Activated naive CD4-positive, alpha-beta T cell treated with anti-CD3 and anti-CD28 coated beads for 36 hours (primary cell): ENCODE measurements at regions of chr14 and their contacts with region 1.

Region 1: DNA sequence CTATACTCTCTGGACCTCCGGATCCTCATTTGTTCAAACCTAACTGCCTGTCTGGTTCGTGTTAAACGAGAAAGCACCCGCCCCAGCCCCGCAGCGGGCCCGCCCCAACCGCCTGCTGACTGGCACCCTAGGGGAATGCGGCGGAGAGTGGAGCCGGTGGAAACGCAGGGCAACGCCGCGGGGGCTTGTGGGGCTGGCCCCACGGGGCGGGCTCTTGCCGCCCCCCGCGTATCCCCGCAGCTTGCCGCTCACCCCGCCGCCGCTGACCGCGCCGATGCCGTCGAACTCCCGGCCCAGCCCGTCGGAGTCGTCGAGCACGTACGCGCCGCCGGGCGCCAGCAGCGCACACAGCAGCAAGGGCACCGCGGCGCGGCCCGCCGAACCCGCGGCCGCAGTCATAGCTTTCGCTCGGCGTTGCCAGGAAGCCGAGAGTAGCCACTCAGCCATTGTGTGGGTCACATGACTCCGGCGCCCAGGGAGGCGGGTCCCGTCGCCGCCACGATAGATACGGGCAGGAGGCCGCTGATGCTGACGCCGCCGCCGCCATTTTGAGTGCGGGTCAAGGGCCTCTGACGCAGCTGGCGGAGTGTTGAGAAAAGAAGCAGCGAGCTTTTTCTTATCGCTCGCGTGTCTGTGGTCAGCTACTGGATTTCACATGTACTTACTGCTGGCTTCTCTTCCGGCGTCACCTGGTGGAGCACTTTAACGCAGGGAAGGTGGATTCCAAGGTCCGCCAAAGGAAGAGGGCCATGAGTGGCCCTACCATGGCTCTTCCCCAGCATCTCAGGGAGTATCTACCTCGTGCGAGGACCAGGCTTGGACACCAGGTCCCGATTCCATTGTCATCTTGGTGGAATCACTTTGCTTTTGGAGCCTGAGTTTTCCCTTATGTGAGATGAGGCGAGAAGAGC is at the start of gene GALC:
- DNase-seq: peak; percentile 96
- H3K4me3 Mint-ChIP-seq: peak within 1 kb of the TSS; percentile 81
- H3K27ac Mint-ChIP-seq: peak within 1 kb of the TSS; percentile 96
- H3K4me1 Mint-ChIP-seq: peaks cover 45% of the 10 kb centered on the region
- H3K27me3 Mint-ChIP-seq: no peaks in the 10 kb centered on the region
- total RNA-seq, gene GALC: 11.2 to 12.7 TPM

Region 2: GRCh38 chr14:87756661-87757060 is 236.3 kb before region 1 on chr14:
- CTCF ChIA-PET with region 1: no interaction called
- intact Hi-C with region 1: no loop called
- DNase-seq: no peak
- H3K4me3 Mint-ChIP-seq: no peak overlapping the region
- H3K27ac Mint-ChIP-seq: no peak overlapping the region
- H3K4me1 Mint-ChIP-seq: no peaks in the 10 kb centered on the region
- H3K27me3 Mint-ChIP-seq: no peaks in the 10 kb centered on the region

Region 3: DNA sequence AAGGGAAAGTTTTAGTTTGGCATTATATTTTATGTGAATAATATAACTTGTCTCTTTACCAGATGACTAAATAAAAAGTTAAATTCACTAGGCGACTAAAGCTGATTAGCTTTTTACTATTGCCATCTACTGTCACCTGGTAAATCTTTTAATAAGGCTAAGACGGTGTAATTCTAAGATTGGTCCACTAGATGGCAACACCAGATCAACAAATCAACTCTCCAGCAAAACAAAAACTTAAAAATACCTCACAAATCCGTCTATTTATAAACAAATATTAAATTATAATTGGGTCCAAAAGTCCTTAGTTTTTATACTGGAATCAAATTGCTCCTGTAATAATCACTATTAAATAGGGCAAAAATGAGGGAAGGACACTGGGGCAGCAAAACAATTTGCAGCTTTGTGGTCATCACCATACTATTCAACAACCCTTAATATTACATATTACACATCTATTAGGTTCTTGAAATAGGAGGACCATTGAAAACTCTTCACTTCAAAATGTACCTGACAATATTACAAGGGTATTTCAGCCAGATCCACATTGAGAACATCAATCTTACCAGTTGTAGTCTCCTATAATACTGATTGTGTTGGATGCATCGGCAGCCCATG is 47.9 kb before region 1 on chr14:
- CTCF ChIA-PET with region 1: interaction called, 4 read pairs
- intact Hi-C with region 1: loop called (anchors 5 kb)
- DNase-seq: no peak
- H3K4me3 Mint-ChIP-seq: no peak overlapping the region
- H3K27ac Mint-ChIP-seq: no peak overlapping the region
- H3K4me1 Mint-ChIP-seq: no peaks in the 10 kb centered on the region
- H3K27me3 Mint-ChIP-seq: no peaks in the 10 kb centered on the region

Region 4: GRCh38 chr14:88029500-88029899 is 36.5 kb after region 1 on chr14:
- CTCF ChIA-PET with region 1: no interaction called
- intact Hi-C with region 1: loop called (anchors 1 kb)
- DNase-seq: peak; percentile 28
- H3K4me3 Mint-ChIP-seq: no peak overlapping the region
- H3K27ac Mint-ChIP-seq: peak overlapping the region; percentile 8
- H3K4me1 Mint-ChIP-seq: peaks cover 53% of the 10 kb centered on the region
- H3K27me3 Mint-ChIP-seq: no peaks in the 10 kb centered on the region

Region 5: GRCh38 chr14:88385345-88386101 is 392.6 kb after region 1 on chr14 and contains the start of gene SPATA7:
- CTCF ChIA-PET with region 1: no interaction called
- intact Hi-C with region 1: loop called (anchors 10 kb)
- DNase-seq: peak; percentile 89
- H3K4me3 Mint-ChIP-seq: peak within 1 kb of the TSS; percentile 93
- H3K27ac Mint-ChIP-seq: peak within 1 kb of the TSS; percentile 56
- H3K4me1 Mint-ChIP-seq: peaks cover 9% of the 10 kb centered on the region
- H3K27me3 Mint-ChIP-seq: no peaks in the 10 kb centered on the region
- total RNA-seq, gene SPATA7: 3.3 to 3.5 TPM

Region 6: DNA sequence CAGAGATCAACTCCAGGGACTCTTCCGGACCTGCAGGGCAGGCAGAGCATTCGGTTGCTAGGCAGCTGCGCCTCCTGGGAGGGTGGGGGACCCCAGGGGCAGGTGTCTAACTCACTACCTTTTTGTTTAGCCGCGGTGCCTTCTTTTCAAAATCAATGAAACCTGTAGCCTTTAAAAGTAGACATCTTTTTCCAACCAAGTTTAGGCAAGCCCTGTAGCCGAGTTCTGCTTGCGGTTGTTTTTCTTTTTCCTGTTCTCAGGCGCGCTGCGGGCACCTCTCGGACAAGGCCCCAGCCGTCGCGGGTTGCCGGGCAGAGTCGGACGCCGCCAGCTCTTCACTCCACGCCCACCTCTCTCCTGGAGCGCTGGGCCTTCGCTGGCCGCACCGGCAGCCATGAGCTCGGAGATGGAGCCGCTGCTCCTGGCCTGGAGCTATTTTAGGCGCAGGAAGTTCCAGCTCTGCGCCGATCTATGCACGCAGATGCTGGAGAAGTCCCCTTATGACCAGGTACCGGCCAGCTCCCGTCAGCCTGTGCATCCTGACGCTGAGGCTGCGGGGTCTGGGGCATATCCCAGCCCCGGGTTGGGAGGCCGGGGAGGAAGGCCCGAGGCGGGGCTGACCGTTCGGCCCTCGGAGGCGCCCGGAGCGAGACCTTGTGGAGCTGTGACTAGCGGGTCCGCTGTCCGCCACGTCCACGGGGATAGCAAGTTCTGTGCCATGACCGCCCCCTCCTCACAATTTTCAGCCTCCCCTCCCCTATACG is 831.5 kb after region 1 on chr14 and contains the start of gene TTC8:
- CTCF ChIA-PET with region 1: no interaction called
- intact Hi-C with region 1: loop called (anchors 10 kb)
- DNase-seq: peak; percentile 88
- H3K4me3 Mint-ChIP-seq: peak within 1 kb of the TSS; percentile 80
- H3K27ac Mint-ChIP-seq: peak within 1 kb of the TSS; percentile 92
- H3K4me1 Mint-ChIP-seq: peaks cover 9% of the 10 kb centered on the region
- H3K27me3 Mint-ChIP-seq: no peaks in the 10 kb centered on the region
- total RNA-seq, gene TTC8: 1.8 to 1.9 TPM